CD8-positive, alpha-beta T cell (primary cell): ENCODE measurements at regions of chr1 and their contacts with region 1.

Region 1: GRCh38 chr1:199041173-199041914 is 402.5 kb downstream of the PTPRC start:
- DNase-seq: peak in 2 of 9 experiments; percentile 43 to 66
- ATAC-seq: peak; percentile 38
- H3K4me3 ChIP-seq: peak overlapping the region; percentile 2 to 13
- H3K4me3 Mint-ChIP-seq: peak overlapping the region; percentile 36
- H3K27ac ChIP-seq: no peak overlapping the region
- H3K27ac Mint-ChIP-seq: peak overlapping the region; percentile 4
- H3K4me1 ChIP-seq: peaks cover 22% of the 10 kb centered on the region
- H3K4me1 Mint-ChIP-seq: peaks cover 27% of the 10 kb centered on the region
- H3K27me3 ChIP-seq: no peaks in the 10 kb centered on the region
- H3K27me3 Mint-ChIP-seq: no peaks in the 10 kb centered on the region
- CTCF ChIP-seq: no peak

Region 2: DNA sequence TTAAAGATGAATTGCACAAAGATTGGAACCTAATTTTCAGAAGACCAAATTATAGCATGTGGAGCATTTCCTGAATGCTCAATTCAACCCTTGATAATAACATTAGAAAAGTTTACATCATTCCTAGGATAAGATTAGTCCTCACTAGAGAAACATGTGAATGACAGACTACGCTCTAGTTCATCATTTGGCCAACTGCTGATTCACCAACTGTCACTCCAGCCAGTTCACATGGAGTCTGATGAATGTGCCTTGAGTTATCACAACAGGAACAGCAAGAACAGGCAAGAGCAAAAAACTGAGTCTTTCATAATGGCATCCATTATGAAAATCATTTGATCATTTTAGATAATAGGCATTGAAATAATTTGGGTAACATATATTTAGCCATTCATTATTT is 13.3 kb after region 1 on chr1:
- CTCF ChIA-PET with region 1: no interaction called
- POLR2A ChIA-PET with region 1: no interaction called
- intact Hi-C with region 1: no loop called
- DNase-seq: no peak
- ATAC-seq: no peak
- H3K4me3 ChIP-seq: no peak overlapping the region
- H3K4me3 Mint-ChIP-seq: no peak overlapping the region
- H3K27ac ChIP-seq: no peak overlapping the region
- H3K27ac Mint-ChIP-seq: no peak overlapping the region
- H3K4me1 ChIP-seq: no peaks in the 10 kb centered on the region
- H3K4me1 Mint-ChIP-seq: peaks cover 3% of the 10 kb centered on the region
- H3K27me3 ChIP-seq: no peaks in the 10 kb centered on the region
- H3K27me3 Mint-ChIP-seq: no peaks in the 10 kb centered on the region
- CTCF ChIP-seq: no peak

Region 3: GRCh38 chr1:199089393-199090122 is 48.2 kb after region 1 on chr1:
- CTCF ChIA-PET with region 1: no interaction called
- POLR2A ChIA-PET with region 1: no interaction called
- intact Hi-C with region 1: loop called in 1 of 2 experiments (anchors 5 kb)
- DNase-seq: peak in 7 of 9 experiments; percentile 11 to 88 (median 32)
- ATAC-seq: peak; percentile 98
- H3K4me3 ChIP-seq: no peak overlapping the region
- H3K4me3 Mint-ChIP-seq: no peak overlapping the region
- H3K27ac ChIP-seq: no peak overlapping the region
- H3K27ac Mint-ChIP-seq: no peak overlapping the region
- H3K4me1 ChIP-seq: peaks cover 23% of the 10 kb centered on the region
- H3K4me1 Mint-ChIP-seq: peaks cover 18% of the 10 kb centered on the region
- H3K27me3 ChIP-seq: no peaks in the 10 kb centered on the region
- H3K27me3 Mint-ChIP-seq: peaks cover 2% of the 10 kb centered on the region
- CTCF ChIP-seq: no peak